Activated naive CD4-positive, alpha-beta T cell treated with anti-CD3 and anti-CD28 coated beads for 36 hours (primary cell): ENCODE measurements at regions of chr6 and their contacts with region 1.

Region 1: GRCh38 chr6:90319044-90319443 is 22.4 kb upstream of the BACH2 start:
- DNase-seq: peak; percentile 55
- H3K4me3 Mint-ChIP-seq: no peak overlapping the region
- H3K27ac Mint-ChIP-seq: peak overlapping the region; percentile 55
- H3K4me1 Mint-ChIP-seq: peaks cover 40% of the 10 kb centered on the region
- H3K27me3 Mint-ChIP-seq: no peaks in the 10 kb centered on the region

Region 2: GRCh38 chr6:90296346-90297114 is 22.5 kb before region 1 on chr6 and contains the start of gene BACH2:
- CTCF ChIA-PET with region 1: interaction called, 4 read pairs
- intact Hi-C with region 1: loop called (anchors 1 kb)
- DNase-seq: peak; percentile 99
- H3K4me3 Mint-ChIP-seq: peak within 1 kb of the TSS; percentile 86
- H3K27ac Mint-ChIP-seq: peak within 1 kb of the TSS; percentile 97
- H3K4me1 Mint-ChIP-seq: peaks cover 41% of the 10 kb centered on the region
- H3K27me3 Mint-ChIP-seq: peaks cover 2% of the 10 kb centered on the region
- total RNA-seq, gene BACH2: 75.1 to 77.9 TPM

Region 3: GRCh38 chr6:90305800-90306448 is 13.1 kb before region 1 on chr6:
- CTCF ChIA-PET with region 1: no interaction called
- intact Hi-C with region 1: loop called (anchors 1 kb)
- DNase-seq: no peak
- H3K4me3 Mint-ChIP-seq: no peak overlapping the region
- H3K27ac Mint-ChIP-seq: no peak overlapping the region
- H3K4me1 Mint-ChIP-seq: peaks cover 31% of the 10 kb centered on the region
- H3K27me3 Mint-ChIP-seq: peaks cover 5% of the 10 kb centered on the region

Region 4: GRCh38 chr6:90350689-90351554 is 31.9 kb after region 1 on chr6:
- CTCF ChIA-PET with region 1: no interaction called
- intact Hi-C with region 1: loop called (anchors 1 kb)
- DNase-seq: peak; percentile 76
- H3K4me3 Mint-ChIP-seq: peak overlapping the region; percentile 68
- H3K27ac Mint-ChIP-seq: peak overlapping the region; percentile 91
- H3K4me1 Mint-ChIP-seq: peaks cover 52% of the 10 kb centered on the region
- H3K27me3 Mint-ChIP-seq: no peaks in the 10 kb centered on the region

Region 5: GRCh38 chr6:90472744-90473143 is 153.7 kb after region 1 on chr6:
- CTCF ChIA-PET with region 1: no interaction called
- intact Hi-C with region 1: loop called (anchors 1 kb)
- DNase-seq: peak; percentile 61
- H3K4me3 Mint-ChIP-seq: peak overlapping the region; percentile 48
- H3K27ac Mint-ChIP-seq: peak overlapping the region; percentile 92
- H3K4me1 Mint-ChIP-seq: peaks cover 86% of the 10 kb centered on the region
- H3K27me3 Mint-ChIP-seq: no peaks in the 10 kb centered on the region